Transverse colon (tissue), 4 donors: ENCODE measurements at regions of chr11 and their contacts with region 1.

Region 1: DNA sequence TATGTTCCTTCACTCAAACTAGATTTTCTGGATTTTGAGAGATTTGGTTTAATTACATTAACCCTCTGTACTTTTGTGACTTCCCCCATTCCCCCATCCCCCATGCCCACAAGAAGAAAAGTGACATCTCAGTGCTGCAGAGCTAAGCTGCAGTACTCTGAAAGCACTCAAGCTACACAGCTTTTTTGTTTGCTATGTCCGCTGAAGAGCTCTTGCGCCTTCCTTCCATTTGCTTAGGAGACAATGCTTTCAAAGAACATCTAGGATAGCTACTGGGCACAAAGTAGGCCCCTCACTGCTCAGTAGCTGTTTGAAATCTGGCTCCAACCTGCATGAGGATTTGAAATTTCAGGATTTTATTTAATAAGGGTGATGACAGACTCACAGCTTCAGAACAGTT is 69.7 kb downstream of the SLC17A6 start:
- DNase-seq: no peak
- H3K4me3 ChIP-seq: no peak overlapping the region
- H3K27ac ChIP-seq: no peak overlapping the region
- H3K4me1 ChIP-seq: no peaks in the 10 kb centered on the region
- H3K27me3 ChIP-seq: no peaks in the 10 kb centered on the region
- CTCF ChIP-seq: no peak
- EP300 ChIP-seq: no peak
- POLR2A ChIP-seq: no peak

Region 2: DNA sequence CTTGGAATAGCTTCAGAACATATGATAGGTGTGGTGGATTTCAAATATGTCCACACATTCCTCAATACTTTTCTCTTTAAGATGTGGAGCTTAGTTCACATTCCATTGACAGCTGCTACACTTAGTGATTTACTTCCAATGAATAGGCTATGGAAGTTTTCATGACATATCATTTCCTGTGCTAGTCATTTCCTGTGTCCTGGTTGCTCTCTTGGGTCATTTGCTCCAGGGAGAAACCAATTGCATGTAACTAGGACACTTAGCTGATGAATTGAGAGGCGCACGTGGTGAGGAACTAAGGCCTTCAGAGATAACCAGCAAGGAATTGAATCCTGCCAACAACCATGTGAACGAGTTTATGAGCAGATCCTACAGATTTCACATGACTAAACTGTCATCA is 51.1 kb after region 1 on chr11:
- in situ Hi-C with region 1: no loop called
- intact Hi-C with region 1: no loop called
- DNase-seq: no peak
- H3K4me3 ChIP-seq: no peak overlapping the region
- H3K27ac ChIP-seq: no peak overlapping the region
- H3K4me1 ChIP-seq: no peaks in the 10 kb centered on the region
- H3K27me3 ChIP-seq: no peaks in the 10 kb centered on the region
- CTCF ChIP-seq: no peak
- EP300 ChIP-seq: no peak
- POLR2A ChIP-seq: no peak

Region 3: GRCh38 chr11:22472306-22472705 is 64.4 kb after region 1 on chr11:
- in situ Hi-C with region 1: no loop called
- intact Hi-C with region 1: loop called (anchors 2 kb)
- DNase-seq: no peak
- H3K4me3 ChIP-seq: no peak overlapping the region
- H3K27ac ChIP-seq: no peak overlapping the region
- H3K4me1 ChIP-seq: no peaks in the 10 kb centered on the region
- H3K27me3 ChIP-seq: no peaks in the 10 kb centered on the region
- CTCF ChIP-seq: no peak
- EP300 ChIP-seq: no peak
- POLR2A ChIP-seq: no peak

Region 4: DNA sequence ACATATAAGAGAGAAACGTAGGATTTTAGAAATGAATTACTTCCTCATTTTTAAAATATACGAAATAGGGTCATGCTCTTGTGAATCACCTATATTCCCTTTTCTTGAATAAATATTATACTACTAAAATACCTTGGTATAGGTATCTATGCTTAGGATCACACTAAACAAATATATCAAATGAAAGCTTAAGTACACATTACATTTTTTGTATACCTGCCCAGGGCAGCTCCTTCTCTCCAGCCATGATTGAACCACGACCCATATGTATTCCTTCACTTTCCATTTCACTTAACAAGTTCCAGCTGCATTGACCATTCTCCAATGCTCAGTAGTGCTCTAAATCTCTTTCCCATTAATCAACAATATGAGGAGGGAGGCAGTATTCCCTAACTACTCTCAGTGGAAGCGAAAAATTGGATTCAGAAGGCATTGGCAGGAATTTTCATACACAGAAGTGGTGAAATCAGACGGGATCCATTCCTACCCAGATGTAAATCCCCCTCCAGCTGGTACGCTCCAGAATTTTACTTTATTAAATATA is 1716.9 kb after region 1 on chr11:
- in situ Hi-C with region 1: no loop called
- intact Hi-C with region 1: loop called (anchors 5 kb)
- DNase-seq: no peak
- H3K4me3 ChIP-seq: no peak overlapping the region
- H3K27ac ChIP-seq: no peak overlapping the region
- H3K4me1 ChIP-seq: no peaks in the 10 kb centered on the region
- H3K27me3 ChIP-seq: no peaks in the 10 kb centered on the region
- CTCF ChIP-seq: no peak
- EP300 ChIP-seq: no peak
- POLR2A ChIP-seq: no peak